ENCODE measurements at regions of chr4 and their contacts with region 1.

Region 1: DNA sequence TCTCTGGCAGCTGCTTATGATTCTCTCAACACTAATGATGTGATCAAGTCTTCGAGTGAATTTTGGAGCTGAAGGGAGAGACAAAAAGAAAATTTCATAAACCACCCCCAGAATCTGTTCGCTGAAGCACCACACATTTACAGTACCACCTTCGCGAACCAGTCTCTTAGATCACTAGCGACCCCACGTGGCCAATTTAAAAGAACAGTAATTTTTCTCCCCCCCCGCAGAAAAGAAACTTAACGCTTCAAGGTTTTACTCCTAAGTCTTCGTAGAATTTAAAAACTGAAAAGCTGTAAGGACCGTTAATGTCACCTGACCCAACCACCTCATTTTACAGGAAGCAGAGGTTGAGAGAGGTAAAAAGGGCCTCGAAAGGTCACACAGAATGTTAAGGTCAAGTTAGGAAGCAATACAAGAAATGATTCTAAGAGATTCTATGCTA is 187.5 kb downstream of the QDPR start:
- DNase-seq: no peak
- ATAC-seq: no peak
- H3K4me3 ChIP-seq: no peak overlapping the region
- H3K27ac ChIP-seq: no peak overlapping the region
- H3K4me1 ChIP-seq: peaks cover 0 to 3% of the 10 kb centered on the region in 2 donors
- H3K27me3 ChIP-seq: no peaks in the 10 kb centered on the region

Region 2: DNA sequence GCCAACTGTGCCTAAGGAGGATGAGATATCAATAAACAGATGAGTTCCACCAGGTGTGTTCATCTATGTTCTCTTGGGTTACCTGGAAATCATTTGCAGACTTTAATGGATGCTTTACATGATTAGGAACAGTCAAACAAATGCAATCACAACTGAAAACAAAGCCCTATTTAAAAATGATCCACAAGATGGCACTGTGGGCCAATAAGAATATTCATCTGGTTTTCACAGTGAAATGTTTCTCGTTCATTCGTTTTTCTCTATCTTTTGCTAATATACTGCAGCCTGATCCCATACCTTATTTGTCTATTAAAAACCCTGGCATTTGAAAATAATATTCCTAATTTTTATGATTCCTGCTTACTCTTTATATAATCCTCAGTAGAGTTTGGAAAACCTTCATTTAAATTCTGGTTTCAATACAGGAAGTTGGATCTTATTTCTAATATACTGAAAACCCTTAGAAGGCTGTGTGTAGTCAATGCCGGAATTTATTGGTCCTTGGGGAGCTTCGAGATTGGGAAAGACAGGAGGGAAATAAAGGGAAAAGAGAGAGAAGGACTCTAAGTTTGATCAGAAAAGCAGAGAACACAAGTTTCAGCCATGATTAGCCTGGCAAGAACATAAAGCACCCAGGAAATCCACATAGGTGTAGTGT is 1034.4 kb before region 1 on chr4:
- intact Hi-C with region 1: loop called (anchors 5 kb)
- DNase-seq: no peak
- ATAC-seq: no peak
- H3K4me3 ChIP-seq: no peak overlapping the region
- H3K27ac ChIP-seq: no peak overlapping the region
- H3K4me1 ChIP-seq: no peaks in the 10 kb centered on the region
- H3K27me3 ChIP-seq: no peaks in the 10 kb centered on the region

Region 3: GRCh38 chr4:16516796-16517439 is 807.5 kb before region 1 on chr4:
- intact Hi-C with region 1: loop called (anchors 10 kb)
- DNase-seq: no peak
- ATAC-seq: peak; percentile 54
- H3K4me3 ChIP-seq: no peak overlapping the region
- H3K27ac ChIP-seq: no peak overlapping the region
- H3K4me1 ChIP-seq: no peaks in the 10 kb centered on the region
- H3K27me3 ChIP-seq: no peaks in the 10 kb centered on the region

Region 4: DNA sequence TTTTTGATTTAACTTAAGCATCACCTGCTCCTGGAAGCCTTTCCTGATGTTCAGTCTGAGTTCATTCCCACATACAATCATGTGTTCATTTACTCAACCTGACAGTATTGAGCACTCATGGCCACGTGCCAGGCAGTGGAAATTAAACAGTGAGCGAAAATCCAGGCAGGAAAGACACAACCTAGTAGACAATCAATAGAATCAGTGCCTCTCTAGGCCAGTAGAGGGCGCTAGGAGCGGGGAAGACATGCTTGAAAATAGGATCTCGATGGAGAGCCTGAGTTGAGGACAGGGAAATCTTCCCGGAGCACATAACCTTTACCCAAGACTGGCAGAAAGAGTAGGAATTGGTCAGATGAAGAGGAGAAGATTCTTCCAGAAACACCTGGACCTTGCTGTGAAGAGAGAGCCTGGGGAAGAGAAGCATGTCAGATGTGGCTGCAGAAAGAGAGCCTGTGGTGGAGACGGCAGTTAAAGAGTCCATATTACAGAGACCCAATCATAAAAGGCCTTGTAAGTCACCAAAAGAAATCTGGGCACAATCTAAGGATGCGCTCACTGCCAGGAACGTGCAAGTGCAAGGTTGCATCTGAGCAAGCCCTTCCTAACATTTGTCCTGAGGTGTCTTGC is 529.5 kb before region 1 on chr4:
- intact Hi-C with region 1: loop called (anchors 5 to 10 kb)
- DNase-seq: peak in 1 of 2 donors; percentile 53
- ATAC-seq: peak; percentile 58
- H3K4me3 ChIP-seq: no peak overlapping the region
- H3K27ac ChIP-seq: no peak overlapping the region
- H3K4me1 ChIP-seq: no peaks in the 10 kb centered on the region
- H3K27me3 ChIP-seq: no peaks in the 10 kb centered on the region

Region 5: GRCh38 chr4:16916719-16917337 is 407.6 kb before region 1 on chr4:
- intact Hi-C with region 1: loop called (anchors 5 kb)
- DNase-seq: no peak
- ATAC-seq: no peak
- H3K4me3 ChIP-seq: no peak overlapping the region
- H3K27ac ChIP-seq: no peak overlapping the region
- H3K4me1 ChIP-seq: no peaks in the 10 kb centered on the region
- H3K27me3 ChIP-seq: no peaks in the 10 kb centered on the region

Region 6: GRCh38 chr4:17236686-17237085 is 87.7 kb before region 1 on chr4:
- intact Hi-C with region 1: no loop called
- DNase-seq: no peak
- ATAC-seq: no peak
- H3K4me3 ChIP-seq: no peak overlapping the region
- H3K27ac ChIP-seq: no peak overlapping the region
- H3K4me1 ChIP-seq: peaks cover 0 to 5% of the 10 kb centered on the region in 2 donors
- H3K27me3 ChIP-seq: no peaks in the 10 kb centered on the region

Measured in aorta (tissue), 5 donors.